Activated CD4-positive, alpha-beta memory T cell treated with anti-CD3 and anti-CD28 coated beads, Interleukin-2, amount 10 ng/mL, durations not matched to agents 7 days and 5 days (primary cell): ENCODE measurements at regions of chr7 and their contacts with region 1.

Region 1: GRCh38 chr7:76314042-76314721 is 11.7 kb downstream of the HSPB1 start:
- DNase-seq: peak; percentile 97
- H3K4me3 Mint-ChIP-seq: peak overlapping the region; percentile 17
- H3K27ac Mint-ChIP-seq: no peak overlapping the region
- H3K4me1 Mint-ChIP-seq: peaks cover 26% of the 10 kb centered on the region
- H3K27me3 Mint-ChIP-seq: no peaks in the 10 kb centered on the region

Region 2: DNA sequence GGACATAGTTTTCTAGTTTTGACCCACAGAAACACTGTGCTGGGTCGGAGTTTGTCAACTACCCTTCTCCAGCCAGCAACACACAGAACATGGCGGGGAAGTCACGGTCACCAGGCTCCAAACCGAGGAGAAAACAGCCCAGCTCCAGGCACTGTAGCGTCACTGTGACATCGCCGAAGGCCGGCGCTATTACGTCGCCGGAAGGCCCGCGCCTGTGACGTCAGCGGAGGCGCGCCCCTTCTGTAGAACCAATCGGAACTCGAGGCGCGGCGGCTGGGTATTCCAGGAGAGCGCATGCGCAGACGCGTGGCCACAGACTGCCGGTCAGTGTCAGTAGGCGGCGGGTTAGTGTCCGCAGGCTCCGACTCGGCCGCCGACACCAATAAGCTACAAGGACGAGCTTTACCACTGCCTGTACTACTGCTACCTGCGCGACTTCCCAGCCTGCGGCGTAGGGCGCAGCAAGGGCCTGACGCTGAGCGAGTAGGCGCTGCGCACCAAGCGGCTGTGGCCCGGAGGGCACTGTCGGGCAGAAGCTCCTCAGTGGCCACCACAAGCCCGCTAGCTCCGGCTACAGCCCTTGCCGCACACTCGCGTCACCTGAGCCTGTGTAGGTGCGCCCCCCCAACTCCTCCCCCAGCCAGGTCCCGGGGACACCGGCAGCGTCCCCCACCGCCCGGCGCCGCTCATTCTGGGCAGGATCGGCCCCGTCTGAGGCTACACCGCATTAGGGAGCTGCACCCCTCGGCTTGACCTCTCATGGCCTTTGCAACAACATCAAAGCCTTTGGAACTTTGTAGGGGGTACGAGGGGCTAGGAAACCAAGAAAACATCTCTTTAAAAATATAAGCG is 147.6 kb before region 1 on chr7:
- CTCF ChIA-PET with region 1: interaction called, 5 read pairs
- POLR2A ChIA-PET with region 1: interaction called, 13 read pairs
- DNase-seq: peak; percentile 94
- H3K4me3 Mint-ChIP-seq: peak overlapping the region; percentile 81
- H3K27ac Mint-ChIP-seq: peak overlapping the region; percentile 75
- H3K4me1 Mint-ChIP-seq: peaks cover 8% of the 10 kb centered on the region
- H3K27me3 Mint-ChIP-seq: no peaks in the 10 kb centered on the region

Region 3: GRCh38 chr7:76291343-76292212 is 22.6 kb before region 1 on chr7:
- CTCF ChIA-PET with region 1: interaction called, 125 read pairs
- POLR2A ChIA-PET with region 1: interaction called, 14 read pairs
- DNase-seq: peak; percentile 90
- H3K4me3 Mint-ChIP-seq: no peak overlapping the region
- H3K27ac Mint-ChIP-seq: peak overlapping the region; percentile 51
- H3K4me1 Mint-ChIP-seq: peaks cover 14% of the 10 kb centered on the region
- H3K27me3 Mint-ChIP-seq: peaks cover 5% of the 10 kb centered on the region

Region 4: GRCh38 chr7:76327610-76328009 is 13.4 kb after region 1 on chr7:
- CTCF ChIA-PET with region 1: interaction called, 9 read pairs
- POLR2A ChIA-PET with region 1: interaction called, 16 read pairs
- DNase-seq: no peak
- H3K4me3 Mint-ChIP-seq: no peak overlapping the region
- H3K27ac Mint-ChIP-seq: no peak overlapping the region
- H3K4me1 Mint-ChIP-seq: peaks cover 20% of the 10 kb centered on the region
- H3K27me3 Mint-ChIP-seq: no peaks in the 10 kb centered on the region

Region 5: GRCh38 chr7:76351372-76351771 is 37.2 kb after region 1 on chr7:
- CTCF ChIA-PET with region 1: interaction called, 52 read pairs
- POLR2A ChIA-PET with region 1: interaction called, 136 read pairs
- DNase-seq: no peak
- H3K4me3 Mint-ChIP-seq: no peak overlapping the region
- H3K27ac Mint-ChIP-seq: no peak overlapping the region
- H3K4me1 Mint-ChIP-seq: peaks cover 68% of the 10 kb centered on the region
- H3K27me3 Mint-ChIP-seq: no peaks in the 10 kb centered on the region